ENCODE measurements at regions of chr3 and their contacts with region 1.

Region 1: GRCh38 chr3:52685709-52686691 is at the starts of genes GNL3 and PBRM1:
- DNase-seq: peak; percentile 87 to 94 (median 92)
- ATAC-seq: peak; percentile 96
- H3K4me3 ChIP-seq: peak within 1 kb of the TSS; percentile 80
- H3K4me3 Mint-ChIP-seq: peak within 1 kb of the TSS; percentile 95 to 99 (median 98)
- H3K27ac ChIP-seq: peak within 1 kb of the TSS; percentile 89
- H3K27ac Mint-ChIP-seq: peak within 1 kb of the TSS; percentile 93 to 99 (median 98)
- H3K4me1 ChIP-seq: peaks cover 21 to 25% of the 10 kb centered on the region in 2 donors
- H3K4me1 Mint-ChIP-seq: peaks cover 23 to 72% (median 62%) of the 10 kb centered on the region in 7 donors
- H3K27me3 ChIP-seq: no peaks in the 10 kb centered on the region
- H3K27me3 Mint-ChIP-seq: no peaks in the 10 kb centered on the region
- total RNA-seq, gene GNL3: 87.9 to 116 (median 97.2) TPM
- total RNA-seq, gene PBRM1: 58.4 to 83.8 (median 74.2) TPM

Region 2: DNA sequence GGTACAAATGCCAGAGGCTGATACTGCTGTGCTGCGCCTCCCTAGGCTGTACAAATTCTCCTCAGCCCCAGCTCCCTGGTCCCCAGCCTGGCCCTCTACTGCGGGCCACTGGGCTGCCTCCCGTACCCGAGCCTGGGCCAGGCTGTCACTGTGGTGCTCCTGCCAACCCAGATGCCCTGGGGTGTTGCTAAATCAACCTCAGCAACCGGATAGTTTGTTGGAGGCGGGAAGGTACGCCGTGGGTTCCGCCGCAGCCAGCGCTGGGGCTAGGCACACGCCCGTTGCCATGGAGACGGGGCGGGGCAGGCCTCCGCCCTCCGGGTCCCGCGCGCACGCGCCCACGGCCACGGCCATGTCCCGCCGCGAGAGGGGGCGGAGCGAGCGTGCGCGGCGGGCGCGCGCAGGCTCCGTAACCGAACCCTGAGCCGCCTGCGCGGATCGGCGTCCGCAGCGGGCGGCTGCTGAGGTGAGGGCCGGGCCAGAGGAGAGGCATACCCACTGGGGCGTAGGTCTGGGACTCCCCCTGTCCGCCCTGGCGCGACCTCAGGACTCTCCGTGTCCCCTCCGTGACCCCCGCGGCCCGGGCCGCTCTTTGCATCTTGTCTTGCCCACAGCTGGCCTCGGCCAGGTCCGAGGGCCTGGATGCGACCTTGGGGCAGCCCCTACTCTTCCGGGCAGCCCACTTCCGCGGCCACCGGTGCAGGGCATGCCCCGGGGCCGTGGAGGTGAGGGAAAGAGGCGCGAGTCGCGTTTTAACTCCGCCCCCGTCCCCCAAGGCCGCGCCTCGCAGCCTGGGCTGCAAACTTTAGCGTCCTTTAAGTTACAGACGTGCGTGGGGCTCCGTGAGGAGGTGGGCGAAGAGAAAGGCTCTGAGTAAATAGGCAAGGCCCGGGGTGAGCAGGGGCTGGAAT is 1014.9 kb before region 1 on chr3 and contains the start of gene TEX264:
- CTCF ChIA-PET with region 1: no interaction called
- POLR2A ChIA-PET with region 1: no interaction called
- intact Hi-C with region 1: loop called in 1 of 2 experiments (anchors 5 kb)
- DNase-seq: peak; percentile 90 to 98 (median 95)
- ATAC-seq: peak; percentile 90
- H3K4me3 ChIP-seq: peak within 1 kb of the TSS; percentile 94
- H3K4me3 Mint-ChIP-seq: peak within 1 kb of the TSS; percentile 89 to 95 (median 92)
- H3K27ac ChIP-seq: peak within 1 kb of the TSS; percentile 85
- H3K27ac Mint-ChIP-seq: peak within 1 kb of the TSS; percentile 24 to 97 (median 93)
- H3K4me1 ChIP-seq: peaks cover 53 to 60% of the 10 kb centered on the region in 2 donors
- H3K4me1 Mint-ChIP-seq: peaks cover 59 to 82% (median 73%) of the 10 kb centered on the region in 7 donors
- H3K27me3 ChIP-seq: no peaks in the 10 kb centered on the region
- H3K27me3 Mint-ChIP-seq: no peaks in the 10 kb centered on the region
- total RNA-seq, gene TEX264: 34.4 to 65.0 (median 41.7) TPM

Region 3: GRCh38 chr3:52536369-52537164 is 149.4 kb before region 1 on chr3 and contains the start of gene UQCC5:
- CTCF ChIA-PET with region 1: no interaction called
- POLR2A ChIA-PET with region 1: interaction called, 4 read pairs
- intact Hi-C with region 1: loop called (anchors 1 kb)
- DNase-seq: peak; percentile 89 to 98 (median 97)
- ATAC-seq: peak; percentile 95
- H3K4me3 ChIP-seq: peak within 1 kb of the TSS; percentile 67
- H3K4me3 Mint-ChIP-seq: peak within 1 kb of the TSS; percentile 96 to 100 (median 99)
- H3K27ac ChIP-seq: peak within 1 kb of the TSS; percentile 85
- H3K27ac Mint-ChIP-seq: peak within 1 kb of the TSS; percentile 96 to 99 (median 98)
- H3K4me1 ChIP-seq: peaks cover 24 to 30% of the 10 kb centered on the region in 2 donors
- H3K4me1 Mint-ChIP-seq: peaks cover 29 to 66% (median 50%) of the 10 kb centered on the region in 7 donors
- H3K27me3 ChIP-seq: no peaks in the 10 kb centered on the region
- H3K27me3 Mint-ChIP-seq: no peaks in the 10 kb centered on the region
- total RNA-seq, gene UQCC5: 5.4 to 11.9 (median 10.7) TPM

Region 4: DNA sequence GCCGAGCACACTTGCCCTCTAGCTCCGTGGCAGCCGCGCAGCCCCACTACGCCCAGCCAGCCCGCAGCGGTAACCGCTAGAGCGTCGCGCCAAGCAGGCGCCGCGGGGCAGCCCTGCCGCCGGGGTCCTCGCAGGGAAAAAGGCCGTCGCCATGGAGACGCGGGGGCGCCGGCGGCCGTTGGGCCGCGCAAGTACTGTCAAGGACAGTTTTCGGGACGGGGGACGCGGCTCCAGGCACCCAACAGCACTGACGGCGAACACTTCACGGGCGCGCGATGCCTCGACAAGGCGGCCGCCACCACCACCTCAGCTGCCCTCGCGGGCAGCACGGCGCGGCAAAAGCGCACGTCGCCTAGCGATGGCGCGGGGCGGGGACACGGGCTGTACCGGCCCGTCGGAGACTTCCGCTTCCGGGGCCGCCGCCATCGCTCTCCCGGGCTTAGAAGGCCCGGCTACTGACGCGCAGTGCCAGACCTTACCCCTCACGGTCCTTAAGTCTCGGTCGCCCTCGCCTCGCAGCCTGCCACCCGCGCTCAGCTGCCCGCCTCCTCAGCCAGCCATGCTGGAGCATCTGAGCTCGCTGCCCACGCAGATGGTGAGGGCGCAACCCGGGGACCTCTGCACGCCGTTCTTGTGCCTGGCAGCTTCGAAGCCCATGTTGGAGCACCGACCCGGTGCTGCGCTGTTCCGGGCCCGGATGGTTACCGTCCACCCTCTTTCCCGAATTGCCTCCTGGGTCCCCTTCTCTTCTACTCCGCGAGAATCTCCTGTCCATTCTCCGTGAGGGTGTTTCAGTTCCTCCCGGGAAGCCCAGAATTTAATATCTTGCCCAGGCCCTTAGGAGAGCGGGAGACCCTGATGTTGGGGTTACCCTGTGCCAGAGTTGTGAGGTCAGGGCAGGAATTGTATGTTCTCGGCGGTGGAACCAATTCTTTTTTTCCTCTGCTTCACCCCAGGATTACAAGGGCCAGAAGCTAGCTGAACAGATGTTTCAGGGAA is 20.0 kb after region 1 on chr3 and contains the starts of genes GLT8D1 and SPCS1:
- CTCF ChIA-PET with region 1: interaction called, 3 read pairs
- POLR2A ChIA-PET with region 1: interaction called, 16 read pairs
- intact Hi-C with region 1: loop called (anchors 1 kb)
- DNase-seq: peak; percentile 83 to 96 (median 91)
- ATAC-seq: peak; percentile 94
- H3K4me3 ChIP-seq: peak within 1 kb of the TSS; percentile 97
- H3K4me3 Mint-ChIP-seq: peak within 1 kb of the TSS; percentile 89 to 96 (median 94)
- H3K27ac ChIP-seq: peak within 1 kb of the TSS; percentile 93
- H3K27ac Mint-ChIP-seq: peak within 1 kb of the TSS; percentile 90 to 97 (median 95)
- H3K4me1 ChIP-seq: peaks cover 25 to 33% of the 10 kb centered on the region in 2 donors
- H3K4me1 Mint-ChIP-seq: peaks cover 21 to 46% (median 40%) of the 10 kb centered on the region in 7 donors
- H3K27me3 ChIP-seq: no peaks in the 10 kb centered on the region
- H3K27me3 Mint-ChIP-seq: no peaks in the 10 kb centered on the region
- total RNA-seq, gene GLT8D1: 18.9 to 47.7 (median 45.2) TPM
- total RNA-seq, gene SPCS1: 55.0 to 95.3 (median 78.2) TPM

Region 5: GRCh38 chr3:52770496-52771333 is 84.7 kb after region 1 on chr3 and contains the start of gene NEK4:
- CTCF ChIA-PET with region 1: no interaction called
- POLR2A ChIA-PET with region 1: interaction called, 5 read pairs
- intact Hi-C with region 1: loop called in 1 of 2 experiments (anchors 1 kb)
- DNase-seq: peak; percentile 44 to 86 (median 65)
- ATAC-seq: peak; percentile 89
- H3K4me3 ChIP-seq: peak within 1 kb of the TSS; percentile 83
- H3K4me3 Mint-ChIP-seq: peak within 1 kb of the TSS; percentile 83 to 99 (median 95)
- H3K27ac ChIP-seq: peak within 1 kb of the TSS; percentile 72
- H3K27ac Mint-ChIP-seq: peak within 1 kb of the TSS; percentile 89 to 97 (median 93)
- H3K4me1 ChIP-seq: peaks cover 5 to 16% of the 10 kb centered on the region in 2 donors
- H3K4me1 Mint-ChIP-seq: peaks cover 12 to 34% (median 23%) of the 10 kb centered on the region in 7 donors
- H3K27me3 ChIP-seq: no peaks in the 10 kb centered on the region
- H3K27me3 Mint-ChIP-seq: peaks cover 0 to 12% (median 0%) of the 10 kb centered on the region in 5 donors
- total RNA-seq, gene NEK4: 14.4 to 28.4 (median 21.1) TPM

Region 6: DNA sequence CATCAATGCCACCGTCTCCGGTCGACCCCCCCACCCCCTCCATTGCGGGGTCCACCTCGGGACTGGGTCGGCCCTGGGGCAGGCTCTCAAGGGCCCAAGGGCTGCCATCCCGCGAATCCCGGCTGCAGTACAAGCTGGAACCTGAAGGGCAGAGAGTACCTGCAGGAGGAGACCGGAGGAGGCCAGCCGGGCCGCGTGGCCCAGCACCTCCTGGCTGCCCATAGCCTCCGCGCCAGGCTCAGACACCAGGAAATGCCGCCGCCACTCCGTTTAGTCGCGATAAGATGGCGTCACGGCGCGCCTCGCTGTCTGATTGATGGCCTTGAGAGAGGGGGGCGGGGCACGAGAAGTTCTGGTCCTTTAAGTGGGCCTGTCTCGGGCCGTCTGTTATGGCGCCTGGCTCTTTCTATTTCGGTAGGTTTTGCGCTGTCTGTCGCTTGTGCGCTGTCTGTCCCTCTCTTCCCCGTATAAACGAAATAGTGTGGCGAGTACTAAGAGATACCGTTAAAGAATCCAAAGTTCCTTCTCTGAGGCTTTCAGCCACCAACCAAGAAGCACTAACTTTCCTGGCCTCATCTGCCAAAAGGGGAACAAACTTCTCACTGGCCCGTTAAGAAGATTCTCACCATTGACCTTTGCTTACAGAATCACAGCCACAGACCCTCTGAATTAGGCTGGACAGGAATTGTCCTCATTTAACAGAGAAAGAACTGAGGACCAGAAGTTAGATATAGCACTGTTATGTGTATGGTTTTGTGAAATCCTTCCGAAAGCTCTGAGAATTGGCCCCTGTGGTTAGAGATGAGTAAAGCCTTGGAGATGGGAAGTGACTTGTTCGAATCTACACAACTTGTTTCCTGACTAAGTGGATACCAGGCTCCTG is 444.4 kb after region 1 on chr3 and contains the start of gene RFT1:
- CTCF ChIA-PET with region 1: no interaction called
- POLR2A ChIA-PET with region 1: no interaction called
- intact Hi-C with region 1: loop called in 1 of 2 experiments (anchors 2 kb)
- DNase-seq: peak; percentile 94 to 98 (median 96)
- ATAC-seq: peak; percentile 97
- H3K4me3 ChIP-seq: peak within 1 kb of the TSS; percentile 62
- H3K4me3 Mint-ChIP-seq: peak within 1 kb of the TSS; percentile 87 to 98 (median 92)
- H3K27ac ChIP-seq: peak within 1 kb of the TSS; percentile 82
- H3K27ac Mint-ChIP-seq: peak within 1 kb of the TSS; percentile 91 to 100 (median 98)
- H3K4me1 ChIP-seq: peaks cover 15 to 19% of the 10 kb centered on the region in 2 donors
- H3K4me1 Mint-ChIP-seq: peaks cover 14 to 39% (median 26%) of the 10 kb centered on the region in 7 donors
- H3K27me3 ChIP-seq: no peaks in the 10 kb centered on the region
- H3K27me3 Mint-ChIP-seq: no peaks in the 10 kb centered on the region
- total RNA-seq, gene RFT1: 16.0 to 32.0 (median 26.0) TPM

Measured in naive thymus-derived CD4-positive, alpha-beta T cell (primary cell).